Activated CD4-positive, alpha-beta T cell treated with anti-CD3 and anti-CD28 coated beads, Interleukin-2, amount 10 ng/mL, durations not matched to agents 24 days and 14 days (primary cell): ENCODE measurements at regions of chr12 and their contacts with region 1.

Region 1: DNA sequence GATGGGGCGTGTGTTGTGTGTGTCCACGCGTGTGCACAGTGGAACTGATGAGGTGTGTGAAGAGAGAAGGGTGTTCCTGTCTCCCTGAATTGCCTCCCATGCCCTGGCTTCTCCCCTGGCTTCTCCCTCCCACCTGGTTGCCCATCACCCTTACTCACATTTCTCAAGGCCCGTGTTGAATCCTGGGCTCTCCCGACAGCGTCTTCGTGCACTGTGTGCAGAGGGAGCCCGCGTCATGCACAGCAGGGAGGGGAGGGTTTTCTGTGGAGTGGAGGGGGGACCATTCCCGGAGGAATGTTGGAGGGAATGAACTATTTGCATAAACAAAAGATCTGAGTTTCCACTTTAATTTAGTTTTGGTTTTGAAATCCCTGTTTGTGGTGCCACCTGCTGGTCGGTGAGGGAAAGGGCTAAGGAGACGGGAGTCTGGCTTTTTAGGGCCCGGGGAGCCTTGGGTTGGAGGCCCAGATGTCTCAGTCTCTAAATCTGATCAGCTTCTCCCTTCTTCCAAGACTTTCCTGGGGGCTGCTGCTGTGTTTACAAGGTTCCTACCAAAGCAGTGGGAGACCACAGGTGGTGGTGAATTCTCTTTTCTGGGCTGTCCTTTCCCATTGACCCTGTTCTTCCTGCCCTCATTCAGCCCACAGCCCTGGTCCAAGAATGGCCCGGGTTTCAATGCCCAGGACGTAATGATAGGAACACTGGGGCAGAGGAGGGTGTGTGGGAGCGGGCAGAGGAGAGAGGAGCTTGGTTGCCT is at the start of gene C1R:
- DNase-seq: peak; percentile 90
- H3K4me3 Mint-ChIP-seq: peak within 1 kb of the TSS; percentile 83
- H3K27ac Mint-ChIP-seq: peak within 1 kb of the TSS; percentile 66
- H3K4me1 Mint-ChIP-seq: peaks cover 10% of the 10 kb centered on the region
- H3K27me3 Mint-ChIP-seq: no peaks in the 10 kb centered on the region
- total RNA-seq, gene C1R: 1.4 and 2.5 TPM in 2 replicates

Region 2: GRCh38 chr12:7042842-7043241 is 49.6 kb before region 1 on chr12:
- intact Hi-C with region 1: loop called (anchors 10 kb)
- DNase-seq: no peak
- H3K4me3 Mint-ChIP-seq: no peak overlapping the region
- H3K27ac Mint-ChIP-seq: no peak overlapping the region
- H3K4me1 Mint-ChIP-seq: peaks cover 7% of the 10 kb centered on the region
- H3K27me3 Mint-ChIP-seq: peaks cover 2% of the 10 kb centered on the region

Region 3: GRCh38 chr12:7155481-7156034 is 63.2 kb after region 1 on chr12:
- intact Hi-C with region 1: no loop called
- DNase-seq: no peak
- H3K4me3 Mint-ChIP-seq: no peak overlapping the region
- H3K27ac Mint-ChIP-seq: no peak overlapping the region
- H3K4me1 Mint-ChIP-seq: peaks cover 7% of the 10 kb centered on the region
- H3K27me3 Mint-ChIP-seq: no peaks in the 10 kb centered on the region